Ascending aorta (tissue), 2 donors: ENCODE measurements at regions of chr6 and their contacts with region 1.

Region 1: GRCh38 chr6:152432758-152433157 is 204.4 kb downstream of the SYNE1 start:
- DNase-seq: no peak
- H3K4me3 ChIP-seq: no peak overlapping the region
- H3K27ac ChIP-seq: no peak overlapping the region
- H3K4me1 ChIP-seq: no peaks in the 10 kb centered on the region
- H3K27me3 ChIP-seq: no peaks in the 10 kb centered on the region
- CTCF ChIP-seq: no peak

Region 2: GRCh38 chr6:151900730-151901433 is 531.9 kb before region 1 on chr6:
- intact Hi-C with region 1: no loop called
- DNase-seq: no peak
- H3K4me3 ChIP-seq: no peak overlapping the region
- H3K27ac ChIP-seq: no peak overlapping the region
- H3K4me1 ChIP-seq: no peaks in the 10 kb centered on the region
- H3K27me3 ChIP-seq: no peaks in the 10 kb centered on the region
- CTCF ChIP-seq: no peak

Region 3: DNA sequence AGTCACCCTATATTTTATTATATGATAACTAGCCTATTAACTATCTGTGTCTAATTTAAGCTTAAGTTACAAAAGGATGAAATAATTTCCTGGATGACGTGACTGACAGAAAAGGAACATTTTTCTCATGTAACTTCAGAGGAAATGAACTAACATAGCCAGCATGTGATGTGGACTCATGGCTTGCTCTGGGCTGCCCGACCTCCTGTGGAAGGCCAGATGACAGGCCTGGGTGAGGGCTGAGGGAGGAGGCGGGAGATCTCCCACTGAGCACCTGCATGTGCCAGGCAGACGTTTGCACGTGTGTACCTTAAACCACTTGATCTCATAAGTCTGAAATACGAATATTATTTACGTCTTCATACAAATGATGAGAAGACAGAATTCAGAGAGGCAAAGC is 116.7 kb before region 1 on chr6:
- intact Hi-C with region 1: no loop called
- DNase-seq: peak; percentile 57 to 83
- H3K4me3 ChIP-seq: no peak overlapping the region
- H3K27ac ChIP-seq: peak overlapping the region; percentile 75 to 86
- H3K4me1 ChIP-seq: peaks cover 0 to 31% of the 10 kb centered on the region in 2 donors
- H3K27me3 ChIP-seq: no peaks in the 10 kb centered on the region
- CTCF ChIP-seq: no peak

Region 4: DNA sequence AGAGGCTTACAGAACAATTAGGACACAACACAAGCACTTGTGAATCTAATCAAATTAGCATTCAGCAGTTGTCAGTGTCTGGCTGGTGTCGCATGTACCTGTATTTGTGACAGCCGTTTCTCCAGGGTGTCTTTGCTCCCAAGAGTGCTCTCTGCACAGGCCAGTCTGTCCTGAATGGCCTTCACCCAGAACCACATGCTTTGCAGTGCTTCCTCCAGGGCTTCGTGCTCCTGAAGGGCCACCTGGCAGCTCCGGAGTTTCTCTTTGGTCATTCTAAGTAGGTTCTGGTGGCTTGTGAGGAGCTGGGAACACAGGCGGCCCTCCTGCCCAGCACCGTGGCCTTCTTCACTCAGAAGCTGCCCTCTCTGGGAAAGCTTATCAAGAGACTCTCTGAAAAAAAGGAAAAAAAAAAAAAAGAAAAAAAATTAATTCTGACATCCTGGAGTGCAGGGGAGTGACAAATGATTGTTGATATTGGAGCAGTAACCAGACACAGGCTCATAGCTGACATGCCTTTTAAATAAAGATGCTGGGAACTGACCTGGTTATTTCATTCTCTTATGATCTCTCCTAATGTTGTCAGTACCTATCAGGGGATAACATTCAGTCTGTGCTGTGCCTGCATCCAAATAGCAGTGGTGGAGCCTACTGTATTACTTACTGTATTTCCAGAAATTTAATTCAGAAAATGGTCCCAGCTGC is 41.4 kb before region 1 on chr6:
- intact Hi-C with region 1: loop called (anchors 5 kb)
- DNase-seq: no peak
- H3K4me3 ChIP-seq: peak overlapping the region; percentile 25 to 49
- H3K27ac ChIP-seq: peak overlapping the region; percentile 74 to 76
- H3K4me1 ChIP-seq: peaks cover 3 to 26% of the 10 kb centered on the region in 2 donors
- H3K27me3 ChIP-seq: no peaks in the 10 kb centered on the region
- CTCF ChIP-seq: no peak

Region 5: DNA sequence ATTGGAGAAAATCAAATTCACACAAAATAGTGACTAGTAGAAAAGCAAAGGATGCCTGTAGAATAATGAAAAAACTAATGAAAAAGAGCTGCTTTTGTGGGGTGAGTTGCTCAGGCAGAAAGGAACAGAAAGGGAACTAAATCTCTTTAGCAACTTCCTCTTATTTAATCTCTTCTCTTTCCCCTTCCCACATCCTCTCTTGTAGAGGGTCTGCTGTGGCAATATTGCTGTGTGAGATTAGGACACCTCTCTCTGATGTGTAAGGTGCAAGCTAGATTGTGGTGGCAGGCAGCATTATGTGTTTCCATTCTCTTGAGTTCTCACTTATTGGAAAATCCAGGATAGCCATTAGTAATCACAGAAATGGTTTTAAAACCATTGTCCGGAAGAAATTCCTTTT is 154.7 kb after region 1 on chr6:
- intact Hi-C with region 1: no loop called
- DNase-seq: no peak
- H3K4me3 ChIP-seq: no peak overlapping the region
- H3K27ac ChIP-seq: no peak overlapping the region
- H3K4me1 ChIP-seq: no peaks in the 10 kb centered on the region
- H3K27me3 ChIP-seq: no peaks in the 10 kb centered on the region
- CTCF ChIP-seq: no peak